Cardiac septum (tissue), 1 donor: ENCODE measurements at regions of chr10 and their contacts with region 1.

Region 1: DNA sequence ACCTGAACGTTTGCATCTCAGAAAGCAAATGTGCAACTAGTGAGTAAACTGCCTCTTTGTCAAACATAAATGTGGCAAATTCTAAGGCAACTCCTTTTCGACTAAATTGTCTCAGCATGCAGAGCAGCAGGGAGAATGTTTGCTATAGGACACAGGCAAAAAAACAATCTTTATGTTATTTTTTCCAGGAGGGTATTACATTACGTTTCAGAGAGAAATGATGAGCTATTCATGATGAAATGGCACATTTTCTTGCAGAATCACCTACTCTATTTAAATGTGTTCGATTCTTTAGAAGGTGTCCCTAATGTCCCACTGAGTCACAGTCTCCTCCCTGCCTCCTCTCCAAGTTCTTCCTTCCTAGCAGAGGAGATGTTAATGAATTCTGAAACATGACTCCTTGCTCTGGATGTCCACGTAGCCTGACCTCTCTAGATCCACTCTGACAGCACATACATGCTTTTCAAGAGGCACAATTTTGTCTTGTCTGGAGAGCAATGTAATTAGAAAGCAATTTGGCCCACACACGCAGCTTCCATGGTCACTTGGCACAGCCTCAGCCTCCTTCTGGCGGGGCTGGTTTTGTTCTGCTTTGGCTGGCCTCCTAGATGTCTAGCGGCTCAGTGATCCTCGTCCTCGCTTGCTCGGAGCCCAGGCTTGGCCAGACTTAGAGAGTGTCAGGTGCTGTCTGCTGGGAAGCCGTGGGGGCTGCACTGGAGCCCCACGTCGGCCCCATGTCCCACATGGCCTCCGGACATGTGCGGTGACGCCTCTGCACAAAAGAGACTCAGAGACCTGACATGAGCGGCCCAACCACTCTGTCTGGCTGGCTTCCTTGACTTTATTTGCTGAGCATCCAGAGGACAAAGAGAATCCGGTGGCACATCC is 125.7 kb upstream of the ZNF438 start:
- DNase-seq: peak; percentile 89

Region 2: DNA sequence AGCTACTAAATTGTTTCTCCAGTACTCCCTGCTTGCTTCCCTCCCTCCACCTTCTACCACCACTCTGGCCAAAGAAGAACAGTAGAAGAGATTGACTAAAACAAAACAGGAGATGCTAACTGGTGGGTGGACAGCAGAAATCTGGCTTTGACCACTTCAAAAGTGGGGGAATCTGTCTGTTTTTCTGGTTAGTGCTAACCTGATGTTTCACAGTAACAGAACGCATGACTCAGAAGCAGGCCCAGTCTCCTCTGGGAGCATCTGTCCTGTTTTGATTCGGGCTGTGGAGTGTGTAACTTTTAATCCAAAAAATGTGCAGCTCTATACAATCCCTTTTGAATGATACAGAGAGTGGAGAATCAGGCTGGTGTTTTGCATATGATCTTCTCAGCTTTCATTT is 93.0 kb before region 1 on chr10:
- intact Hi-C with region 1: loop called (anchors 5 kb)
- DNase-seq: no peak